ENCODE measurements at regions of chr4 and their contacts with region 1.

Region 1: DNA sequence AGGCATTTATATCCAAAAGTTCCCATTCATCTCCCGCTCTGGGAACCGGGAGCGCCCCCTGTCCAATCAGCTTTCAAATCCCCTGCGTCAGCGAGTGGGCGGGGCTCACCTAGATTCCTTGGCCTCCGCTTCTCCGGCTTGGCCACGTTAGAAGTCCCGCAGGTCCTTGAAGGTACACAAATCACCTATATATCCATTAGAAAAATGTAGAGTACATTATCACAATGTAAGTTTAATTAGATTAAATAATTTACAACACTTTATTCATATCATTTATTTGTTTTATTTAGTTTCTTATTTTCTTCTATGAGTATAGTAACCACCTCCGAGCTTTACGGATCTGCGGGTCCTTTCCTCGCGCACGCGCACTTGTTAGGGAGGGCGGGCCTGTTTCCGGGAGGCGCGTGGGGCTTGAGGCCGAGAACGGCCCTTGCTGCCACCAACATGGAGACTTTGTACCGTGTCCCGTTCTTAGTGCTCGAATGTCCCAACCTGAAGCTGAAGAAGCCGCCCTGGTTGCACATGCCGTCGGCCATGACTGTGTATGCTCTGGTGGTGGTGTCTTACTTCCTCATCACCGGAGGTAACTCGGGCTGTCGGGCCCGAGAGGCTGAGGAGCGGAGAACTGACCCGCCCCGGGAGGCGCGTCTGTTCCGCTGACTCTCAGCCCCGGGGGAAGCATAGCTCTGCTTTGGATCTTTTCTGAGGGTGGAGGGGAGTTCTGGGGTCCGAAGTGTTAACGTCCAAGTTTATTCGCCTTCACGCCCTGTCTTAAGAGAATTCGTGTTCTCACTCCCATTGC is at the start of gene OSTC:
- DNase-seq: peak; percentile 87
- CTCF ChIP-seq: peak; percentile 23

Region 2: GRCh38 chr4:108662629-108663028 is 12.2 kb after region 1 on chr4:
- CTCF ChIA-PET with region 1: interaction called, 10 read pairs
- POLR2A ChIA-PET with region 1: no interaction called
- DNase-seq: no peak
- CTCF ChIP-seq: no peak

Measured in GM10248 (cell line).